Naive thymus-derived CD4-positive, alpha-beta T cell (primary cell): ENCODE measurements at regions of chr15 and their contacts with region 1.

Region 1: DNA sequence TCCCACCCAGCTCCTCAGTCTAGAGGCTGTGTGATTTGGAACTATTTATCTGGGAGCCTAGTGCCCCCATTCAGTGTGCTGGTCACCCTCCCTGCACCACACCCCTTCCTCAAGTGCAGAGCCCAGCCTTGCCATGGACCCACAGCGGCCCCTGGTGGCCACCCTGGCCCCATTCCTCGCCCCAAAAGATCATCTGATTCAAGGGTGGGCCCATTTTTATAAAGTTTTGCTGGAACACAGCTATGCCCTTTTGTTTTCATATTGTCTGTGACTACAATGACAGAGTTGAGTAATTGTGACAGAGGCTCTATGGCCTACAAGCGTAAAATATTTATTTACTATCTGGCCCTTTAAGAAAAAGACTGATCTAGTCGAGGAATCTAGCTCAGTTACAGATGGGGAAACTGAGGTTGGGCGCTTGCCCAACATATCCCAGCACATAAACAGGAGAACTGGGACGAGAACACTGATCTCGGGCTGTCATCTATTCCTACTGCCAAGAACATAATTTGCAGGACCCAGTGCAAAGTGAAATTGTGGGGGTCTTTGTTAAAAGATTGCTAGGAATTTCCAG is 1.8 kb downstream of the FES start:
- DNase-seq: peak; percentile 49 to 85 (median 72)
- ATAC-seq: peak; percentile 79
- H3K4me3 ChIP-seq: no peak overlapping the region
- H3K4me3 Mint-ChIP-seq: peak overlapping the region in 2 of 10 donors; percentile 42 to 69
- H3K27ac ChIP-seq: no peak overlapping the region
- H3K27ac Mint-ChIP-seq: peak overlapping the region in 2 of 9 donors; percentile 59 to 87
- H3K4me1 ChIP-seq: peaks cover 6 to 7% of the 10 kb centered on the region in 2 donors
- H3K4me1 Mint-ChIP-seq: peaks cover 0 to 43% (median 11%) of the 10 kb centered on the region in 7 donors
- H3K27me3 ChIP-seq: no peaks in the 10 kb centered on the region
- H3K27me3 Mint-ChIP-seq: peaks cover 0 to 6% (median 4%) of the 10 kb centered on the region in 5 donors

Region 2: GRCh38 chr15:90320061-90320884 is 565.9 kb before region 1 on chr15:
- CTCF ChIA-PET with region 1: interaction called, 5 read pairs
- POLR2A ChIA-PET with region 1: no interaction called
- intact Hi-C with region 1: loop called (anchors 1 to 2 kb)
- DNase-seq: peak; percentile 39 to 74 (median 65)
- ATAC-seq: peak; percentile 100
- H3K4me3 ChIP-seq: no peak overlapping the region
- H3K4me3 Mint-ChIP-seq: peak overlapping the region in 6 of 10 donors; percentile 8 to 52 (median 38)
- H3K27ac ChIP-seq: no peak overlapping the region
- H3K27ac Mint-ChIP-seq: peak overlapping the region in 2 of 9 donors; percentile 26 to 28
- H3K4me1 ChIP-seq: peaks cover 0 to 5% of the 10 kb centered on the region in 2 donors
- H3K4me1 Mint-ChIP-seq: peaks cover 3 to 10% (median 8%) of the 10 kb centered on the region in 7 donors
- H3K27me3 ChIP-seq: no peaks in the 10 kb centered on the region
- H3K27me3 Mint-ChIP-seq: peaks cover 0 to 2% (median 0%) of the 10 kb centered on the region in 5 donors

Region 3: GRCh38 chr15:90482124-90483011 is 403.8 kb before region 1 on chr15:
- CTCF ChIA-PET with region 1: interaction called, 3 read pairs
- POLR2A ChIA-PET with region 1: no interaction called
- intact Hi-C with region 1: loop called (anchors 5 to 10 kb)
- DNase-seq: peak in 7 of 9 donors; percentile 28 to 60 (median 47)
- ATAC-seq: peak; percentile 61
- H3K4me3 ChIP-seq: no peak overlapping the region
- H3K4me3 Mint-ChIP-seq: no peak overlapping the region
- H3K27ac ChIP-seq: no peak overlapping the region
- H3K27ac Mint-ChIP-seq: peak overlapping the region in 4 of 9 donors; percentile 9 to 50 (median 32)
- H3K4me1 ChIP-seq: peaks cover 10 to 11% of the 10 kb centered on the region in 2 donors
- H3K4me1 Mint-ChIP-seq: peaks cover 9 to 44% (median 40%) of the 10 kb centered on the region in 7 donors
- H3K27me3 ChIP-seq: no peaks in the 10 kb centered on the region
- H3K27me3 Mint-ChIP-seq: no peaks in the 10 kb centered on the region

Region 4: DNA sequence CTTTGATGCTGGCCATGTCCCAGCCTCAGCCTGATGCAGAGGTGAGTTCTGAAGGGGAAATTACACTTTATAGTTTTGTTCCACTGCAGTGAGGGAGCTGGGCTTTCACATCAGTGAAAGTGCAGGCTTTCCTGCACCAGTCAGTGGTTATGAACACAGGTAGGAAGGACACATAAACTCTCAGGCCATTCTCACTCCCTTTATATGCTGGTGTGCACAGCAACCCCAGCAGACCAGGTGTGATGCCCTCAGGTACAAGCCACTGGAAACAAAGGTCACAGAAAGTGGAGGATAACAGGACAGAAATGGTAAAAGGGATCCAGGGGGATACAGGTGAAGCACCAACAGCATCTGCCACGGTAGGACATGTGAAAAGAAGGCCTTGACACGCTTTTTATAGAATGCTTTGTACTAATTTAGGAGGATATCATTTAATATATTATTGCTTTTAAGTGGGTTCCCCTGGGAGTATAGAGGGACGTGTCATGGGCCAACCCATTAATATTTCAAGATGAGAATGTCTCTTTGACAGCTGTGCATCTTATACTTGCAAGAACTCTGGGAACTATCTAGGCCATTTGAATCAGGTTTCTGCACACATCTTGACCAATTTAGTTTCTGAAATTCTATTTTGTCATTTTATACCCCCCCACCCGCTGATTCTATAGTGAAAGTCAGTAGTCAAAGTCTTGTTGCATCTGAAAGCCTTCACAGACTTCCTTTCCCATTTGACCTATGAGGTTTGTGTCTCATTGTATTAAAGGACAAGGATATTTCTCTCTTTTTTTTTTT is 193.9 kb before region 1 on chr15:
- CTCF ChIA-PET with region 1: interaction called, 7 read pairs
- POLR2A ChIA-PET with region 1: no interaction called
- intact Hi-C with region 1: loop called (anchors 1 to 5 kb)
- DNase-seq: no peak
- ATAC-seq: no peak
- H3K4me3 ChIP-seq: no peak overlapping the region
- H3K4me3 Mint-ChIP-seq: peak overlapping the region in 1 of 10 donors; percentile 33
- H3K27ac ChIP-seq: no peak overlapping the region
- H3K27ac Mint-ChIP-seq: peak overlapping the region in 1 of 9 donors; percentile 40
- H3K4me1 ChIP-seq: no peaks in the 10 kb centered on the region
- H3K4me1 Mint-ChIP-seq: peaks cover 1 to 52% (median 10%) of the 10 kb centered on the region in 7 donors
- H3K27me3 ChIP-seq: no peaks in the 10 kb centered on the region
- H3K27me3 Mint-ChIP-seq: no peaks in the 10 kb centered on the region

Region 5: DNA sequence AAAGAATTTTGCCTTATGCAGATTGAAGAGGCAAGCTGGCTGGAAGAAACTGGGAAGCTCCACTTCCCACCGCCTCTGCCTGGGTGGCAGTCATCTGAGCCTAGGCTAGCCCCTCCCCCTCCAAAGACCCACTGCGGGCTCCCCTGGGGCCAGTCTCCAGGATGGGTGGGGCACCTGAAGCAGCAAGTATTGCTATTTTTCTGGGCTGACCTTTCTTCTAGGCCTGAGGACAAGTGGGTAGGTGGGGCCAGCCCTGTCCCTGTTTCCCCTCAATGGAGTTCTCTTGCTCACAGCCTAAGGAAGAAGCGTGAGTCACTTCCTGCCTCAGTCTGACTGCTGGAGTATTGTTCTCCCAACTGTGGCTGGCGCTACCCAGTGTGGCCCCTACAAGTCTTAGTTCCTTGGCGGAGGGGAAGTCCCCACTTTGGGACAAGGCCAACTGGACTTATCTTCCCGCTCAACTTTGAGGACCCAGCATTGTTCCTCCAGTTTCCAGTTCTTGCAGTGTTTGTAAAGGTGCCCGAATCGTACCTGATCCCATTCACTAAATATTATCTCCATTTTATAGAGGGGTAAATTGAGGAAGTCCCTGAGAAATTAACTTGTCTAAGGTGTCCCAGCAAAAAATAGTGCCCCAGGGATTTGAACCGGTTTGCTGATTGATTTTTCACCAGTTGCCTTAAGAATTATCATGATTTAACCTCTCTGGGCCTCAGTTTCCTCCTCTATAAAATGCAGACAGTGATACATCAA is 16.4 kb before region 1 on chr15:
- CTCF ChIA-PET with region 1: no interaction called
- POLR2A ChIA-PET with region 1: interaction called, 10 read pairs
- intact Hi-C with region 1: no loop called
- DNase-seq: peak in 1 of 9 donors; percentile 67
- ATAC-seq: peak; percentile 73
- H3K4me3 ChIP-seq: peak overlapping the region; percentile 53
- H3K4me3 Mint-ChIP-seq: peak overlapping the region; percentile 82 to 93 (median 90)
- H3K27ac ChIP-seq: peak overlapping the region; percentile 73
- H3K27ac Mint-ChIP-seq: peak overlapping the region; percentile 82 to 97 (median 92)
- H3K4me1 ChIP-seq: peaks cover 27% of the 10 kb centered on the region in 2 donors
- H3K4me1 Mint-ChIP-seq: peaks cover 22 to 66% (median 45%) of the 10 kb centered on the region in 7 donors
- H3K27me3 ChIP-seq: no peaks in the 10 kb centered on the region
- H3K27me3 Mint-ChIP-seq: no peaks in the 10 kb centered on the region